ENCODE measurements at regions of chr19 and their contacts with region 1.

Region 1: GRCh38 chr19:37370880-37371661 is at the start of gene ZNF527:
- DNase-seq: peak; percentile 96
- H3K4me3 Mint-ChIP-seq: peak within 1 kb of the TSS; percentile 99
- H3K27ac Mint-ChIP-seq: peak within 1 kb of the TSS; percentile 87
- H3K4me1 Mint-ChIP-seq: peaks cover 13% of the 10 kb centered on the region
- H3K27me3 Mint-ChIP-seq: no peaks in the 10 kb centered on the region
- total RNA-seq, gene ZNF527: 3.9 and 4.5 TPM in 2 replicates

Region 2: DNA sequence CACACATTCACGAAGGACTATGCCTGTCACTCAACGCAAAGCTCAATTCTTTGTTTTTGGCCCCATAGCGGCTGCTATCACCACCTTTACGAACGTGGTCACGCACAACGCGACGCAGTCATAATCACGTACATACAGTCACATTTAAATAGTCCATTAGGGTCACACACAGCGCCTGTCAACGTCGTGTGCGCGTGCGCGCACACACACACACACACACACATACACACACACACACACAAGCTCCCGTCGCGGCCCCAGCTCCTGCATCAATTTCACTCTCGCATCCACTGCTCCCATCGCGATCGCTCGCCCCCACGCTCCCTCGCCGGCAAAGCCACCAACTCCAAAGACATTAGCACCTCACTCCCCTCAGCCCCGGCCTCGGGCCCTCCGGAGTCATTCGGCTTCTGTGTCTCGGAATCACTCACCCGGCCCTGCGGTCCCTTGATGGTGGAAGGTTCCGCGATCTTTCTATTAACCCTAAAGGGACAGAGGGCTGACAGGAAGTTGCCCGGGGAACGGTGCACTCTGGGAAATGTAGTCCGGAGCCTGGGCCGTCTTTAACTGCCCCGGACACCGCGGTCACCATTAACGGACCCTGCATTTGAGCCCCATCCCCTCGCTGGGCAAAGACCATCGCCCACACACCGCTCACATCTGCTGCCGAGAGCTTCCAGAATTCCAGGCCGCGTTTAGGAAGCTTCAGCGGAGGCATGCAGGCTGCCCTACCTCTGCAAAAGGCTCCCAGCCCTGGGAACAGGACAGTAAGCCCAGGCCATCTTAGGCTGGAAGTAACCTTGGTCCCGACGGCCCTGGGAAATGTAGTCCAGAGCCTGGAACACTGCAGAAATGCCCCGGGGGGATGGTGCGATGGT is 532.9 kb before region 1 on chr19 and contains the start of gene ZNF790:
- intact Hi-C with region 1: loop called (anchors 5 kb)
- DNase-seq: peak; percentile 81
- H3K4me3 Mint-ChIP-seq: no peak within 1 kb of the TSS
- H3K27ac Mint-ChIP-seq: no peak within 1 kb of the TSS
- H3K4me1 Mint-ChIP-seq: no peaks in the 10 kb centered on the region
- H3K27me3 Mint-ChIP-seq: no peaks in the 10 kb centered on the region
- total RNA-seq, gene ZNF790: 4.4 and 4.5 TPM in 2 replicates

Region 3: GRCh38 chr19:37217855-37218591 is 153.0 kb before region 1 on chr19 and contains the start of gene ZNF383:
- intact Hi-C with region 1: loop called (anchors 2 kb)
- DNase-seq: peak; percentile 78
- H3K4me3 Mint-ChIP-seq: peak within 1 kb of the TSS; percentile 96
- H3K27ac Mint-ChIP-seq: peak within 1 kb of the TSS; percentile 90
- H3K4me1 Mint-ChIP-seq: peaks cover 20% of the 10 kb centered on the region
- H3K27me3 Mint-ChIP-seq: no peaks in the 10 kb centered on the region
- total RNA-seq, gene ZNF383: 6.3 TPM in 2 replicates

Region 4: DNA sequence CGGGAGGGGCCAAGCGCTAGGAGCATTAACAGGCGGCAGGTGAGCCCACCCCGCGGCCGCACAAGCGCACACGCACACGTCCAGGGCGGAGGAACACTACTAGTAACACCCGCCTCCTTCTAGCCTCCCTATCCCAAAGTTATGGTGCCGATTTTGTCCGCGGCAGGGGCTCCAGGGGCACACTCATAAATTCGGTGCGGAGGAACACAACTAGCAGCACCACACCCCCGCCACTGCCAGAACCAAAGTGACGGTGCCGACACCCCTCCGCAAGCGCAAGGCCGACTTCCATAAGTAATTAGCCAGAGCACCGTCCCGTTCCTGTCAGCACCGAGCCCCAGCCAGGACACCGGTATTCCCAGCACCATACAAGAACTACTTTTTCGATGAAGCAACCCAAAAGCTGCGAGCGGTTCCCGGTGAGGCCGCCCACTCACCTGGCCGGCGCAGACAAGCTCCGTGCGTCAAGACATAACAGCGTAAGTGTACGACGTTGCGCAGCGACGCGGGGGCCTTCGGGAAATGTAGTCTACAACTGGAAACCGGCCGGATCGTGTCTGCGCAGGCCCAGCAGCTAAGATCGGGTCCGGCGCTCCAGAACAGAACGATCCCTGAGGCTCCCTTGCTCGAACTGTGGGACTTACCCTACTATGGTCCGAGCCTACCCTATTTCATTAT is 223.4 kb after region 1 on chr19 and contains the starts of genes ZNF540 and ZNF571:
- intact Hi-C with region 1: loop called (anchors 1 kb)
- DNase-seq: peak; percentile 81
- H3K4me3 Mint-ChIP-seq: peak within 1 kb of the TSS; percentile 88
- H3K27ac Mint-ChIP-seq: peak within 1 kb of the TSS; percentile 91
- H3K4me1 Mint-ChIP-seq: peaks cover 24% of the 10 kb centered on the region
- H3K27me3 Mint-ChIP-seq: no peaks in the 10 kb centered on the region
- total RNA-seq, gene ZNF540: 0.39 and 0.70 TPM in 2 replicates
- total RNA-seq, gene ZNF571: 0.64 and 1.4 TPM in 2 replicates

Region 5: DNA sequence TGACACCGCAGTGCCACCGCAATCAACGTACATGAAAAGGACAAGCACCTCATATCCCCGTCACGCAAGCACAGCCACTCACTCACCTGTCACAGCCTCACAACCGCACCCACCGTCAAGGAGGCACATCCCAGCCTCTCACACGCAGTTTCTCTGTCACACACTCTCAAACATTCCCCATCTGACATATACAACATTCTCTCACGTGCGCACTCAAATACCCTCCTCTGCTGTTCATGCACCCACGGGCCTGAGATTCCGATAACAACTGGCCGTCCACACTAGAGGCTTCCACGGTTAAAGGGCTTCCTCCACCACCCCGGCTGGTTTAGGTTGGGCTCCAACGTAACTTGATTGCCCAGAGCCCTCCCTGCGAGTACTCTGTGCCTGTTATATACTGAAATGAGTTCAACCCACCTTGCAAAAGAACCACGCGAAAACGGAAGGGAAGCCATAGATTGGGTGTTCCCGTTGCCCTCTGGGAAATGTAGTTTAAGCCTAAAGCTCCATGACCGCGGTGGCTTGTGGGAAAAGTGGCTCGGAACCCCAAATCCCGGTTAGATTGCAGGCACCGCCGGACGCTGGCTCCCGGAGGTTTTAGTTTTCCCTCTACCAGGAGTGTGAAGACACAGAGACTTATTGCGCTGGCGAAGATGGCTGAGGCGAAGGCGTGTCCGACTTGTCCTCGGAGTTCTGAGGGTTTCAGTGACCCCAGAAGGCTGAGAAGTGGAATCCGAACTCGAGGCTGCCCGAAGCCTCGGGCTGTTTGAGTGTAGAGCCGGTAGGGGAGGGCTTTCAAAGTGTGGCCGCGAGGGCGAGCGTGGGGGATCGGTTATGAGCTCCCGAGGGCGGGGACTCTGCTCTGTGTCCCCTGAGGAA is 408.3 kb after region 1 on chr19 and contains the start of gene ZNF573:
- intact Hi-C with region 1: loop called (anchors 1 kb)
- DNase-seq: peak; percentile 73
- H3K4me3 Mint-ChIP-seq: peak within 1 kb of the TSS; percentile 95
- H3K27ac Mint-ChIP-seq: peak within 1 kb of the TSS; percentile 86
- H3K4me1 Mint-ChIP-seq: peaks cover 15% of the 10 kb centered on the region
- H3K27me3 Mint-ChIP-seq: no peaks in the 10 kb centered on the region
- total RNA-seq, gene ZNF573: 3.7 and 5.6 TPM in 2 replicates